ENCODE measurements at regions of chr7 and their contacts with region 1.

Region 1: GRCh38 chr7:43314379-43315189 is 202.1 kb downstream of the HECW1 start:
- DNase-seq: no peak
- H3K4me3 ChIP-seq: no peak overlapping the region
- H3K27ac ChIP-seq: no peak overlapping the region
- H3K4me1 ChIP-seq: peaks cover 0 to 7% (median 3%) of the 10 kb centered on the region in 4 experiments; a peak in 4 of 7 replicates
- H3K27me3 ChIP-seq: no peaks in the 10 kb centered on the region
- CTCF ChIP-seq: no peak
- EP300 ChIP-seq: no peak
- POLR2A ChIP-seq: no peak
- RAD21 ChIP-seq: no peak

Region 2: GRCh38 chr7:43296306-43296705 is 18.3 kb before region 1 on chr7:
- CTCF ChIA-PET with region 1: interaction called, 14 read pairs
- POLR2A ChIA-PET with region 1: no interaction called
- DNase-seq: no peak
- H3K4me3 ChIP-seq: no peak overlapping the region
- H3K27ac ChIP-seq: no peak overlapping the region
- H3K4me1 ChIP-seq: peaks cover 18 to 34% (median 26%) of the 10 kb centered on the region in 4 experiments
- H3K27me3 ChIP-seq: no peaks in the 10 kb centered on the region
- CTCF ChIP-seq: peak in 2 of 3 experiments; percentile 4 to 23; a peak in 2 of 4 replicates
- EP300 ChIP-seq: no peak
- POLR2A ChIP-seq: no peak
- RAD21 ChIP-seq: 0 out of 4 replicates have a peak, but pooled peaks of 1 of the 2 experiments have one; percentile 3

Measured in H1 (cell line).